Endothelial cell of umbilical vein (primary cell): ENCODE measurements at regions of chr17 and their contacts with region 1.

Region 1: GRCh38 chr17:73192894-73193701 is at the start of gene COG1:
- DNase-seq: peak; percentile 86
- H3K4me3 ChIP-seq: peak within 1 kb of the TSS; percentile 78 to 94 (median 78)
- H3K27ac ChIP-seq: peak within 1 kb of the TSS; percentile 56
- H3K4me1 ChIP-seq: peaks cover 14% of the 10 kb centered on the region
- H3K27me3 ChIP-seq: no peaks in the 10 kb centered on the region
- CTCF ChIP-seq: no peak
- POLR2A ChIP-seq: peak; percentile 77
- total RNA-seq, gene COG1: 38.6 and 39.0 TPM in 2 replicates

Region 2: DNA sequence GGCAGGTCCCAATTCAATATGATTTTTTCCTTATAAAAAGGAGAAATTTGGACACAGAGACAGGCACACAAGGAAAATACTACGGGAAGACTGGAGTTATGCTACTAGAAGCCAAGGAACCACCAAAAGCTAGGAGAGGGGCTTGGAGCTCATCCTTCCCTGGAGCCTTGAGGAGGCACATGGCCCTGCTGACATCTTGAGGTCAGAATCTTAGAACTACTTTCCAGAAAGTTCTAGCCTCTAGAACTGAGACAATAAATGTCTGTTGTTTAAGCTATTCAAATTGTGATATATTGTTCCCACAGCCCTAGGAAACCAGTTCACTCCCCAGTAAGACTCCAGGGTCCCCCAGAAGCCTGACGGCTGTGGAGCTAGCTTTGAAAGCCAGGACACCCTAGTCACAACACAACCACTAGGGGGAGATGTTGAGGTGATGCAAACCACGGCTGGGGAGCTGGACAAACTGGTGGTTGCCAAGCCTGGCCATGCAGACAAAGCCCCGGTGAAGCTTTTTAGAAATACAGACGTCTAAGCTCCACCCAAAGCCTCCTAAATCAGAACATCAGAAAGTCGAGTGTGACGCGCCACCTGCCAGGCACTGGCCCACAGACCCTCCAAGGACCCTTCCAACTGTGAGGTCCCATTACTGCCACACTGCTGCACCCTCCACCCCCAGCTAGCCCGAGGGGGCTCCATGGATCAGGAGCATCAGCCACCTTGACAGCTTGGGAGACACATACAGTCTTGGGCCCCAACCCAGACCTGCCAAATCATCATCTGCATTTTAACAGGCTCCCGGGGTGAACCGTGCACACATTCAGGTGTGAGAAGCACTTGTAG is 207.0 kb before region 1 on chr17:
- CTCF ChIA-PET with region 1: interaction called, 17 read pairs
- POLR2A ChIA-PET with region 1: no interaction called
- dilution Hi-C with region 1: no loop called
- intact Hi-C with region 1: loop called (anchors 2 kb)
- DNase-seq: peak; percentile 53
- H3K4me3 ChIP-seq: no peak overlapping the region
- H3K27ac ChIP-seq: no peak overlapping the region
- H3K4me1 ChIP-seq: peaks cover 12% of the 10 kb centered on the region
- H3K27me3 ChIP-seq: no peaks in the 10 kb centered on the region
- CTCF ChIP-seq: peak; percentile 88 to 89
- POLR2A ChIP-seq: no peak

Region 3: GRCh38 chr17:73045724-73046123 is 147.4 kb before region 1 on chr17:
- CTCF ChIA-PET with region 1: no interaction called
- POLR2A ChIA-PET with region 1: no interaction called
- dilution Hi-C with region 1: no loop called
- intact Hi-C with region 1: no loop called
- DNase-seq: no peak
- H3K4me3 ChIP-seq: no peak overlapping the region
- H3K27ac ChIP-seq: no peak overlapping the region
- H3K4me1 ChIP-seq: no peaks in the 10 kb centered on the region
- H3K27me3 ChIP-seq: no peaks in the 10 kb centered on the region
- CTCF ChIP-seq: no peak
- POLR2A ChIP-seq: no peak

Region 4: DNA sequence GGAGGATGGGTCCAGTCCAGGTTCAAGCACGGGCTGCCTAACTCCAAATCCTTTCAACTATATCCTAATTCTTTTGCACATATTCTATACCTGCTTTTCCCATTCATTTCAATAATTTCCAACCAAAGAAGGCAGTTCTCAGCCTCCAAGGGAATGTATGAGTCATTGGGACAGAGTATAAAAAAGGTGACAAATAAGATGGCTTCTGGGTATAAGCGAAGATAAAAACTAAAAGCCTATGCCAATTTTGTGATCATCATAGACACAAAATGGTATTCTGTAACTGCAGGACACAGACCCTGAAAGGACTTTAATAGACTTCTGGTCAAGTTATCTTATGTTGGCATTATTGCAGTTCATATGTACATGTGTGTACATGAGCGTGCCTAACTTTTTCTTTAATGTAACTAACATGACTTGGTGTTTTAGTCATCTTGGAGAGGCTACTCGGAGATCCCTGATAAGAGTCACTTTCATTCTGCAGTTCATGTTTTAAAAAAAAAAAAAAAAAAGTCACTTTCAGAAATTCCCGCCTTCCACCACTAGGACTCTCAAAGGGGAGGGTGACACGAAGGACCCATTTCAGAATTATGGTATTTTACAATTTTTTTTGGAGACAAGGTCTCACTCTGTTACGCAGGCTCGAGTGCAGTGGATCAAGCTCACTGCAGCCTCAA is 17.0 kb after region 1 on chr17:
- CTCF ChIA-PET with region 1: interaction called, 11 read pairs
- POLR2A ChIA-PET with region 1: no interaction called
- dilution Hi-C with region 1: no loop called
- intact Hi-C with region 1: no loop called
- DNase-seq: no peak
- H3K4me3 ChIP-seq: no peak overlapping the region
- H3K27ac ChIP-seq: no peak overlapping the region
- H3K4me1 ChIP-seq: no peaks in the 10 kb centered on the region
- H3K27me3 ChIP-seq: no peaks in the 10 kb centered on the region
- CTCF ChIP-seq: peak; percentile 13 to 21
- POLR2A ChIP-seq: no peak

Region 5: DNA sequence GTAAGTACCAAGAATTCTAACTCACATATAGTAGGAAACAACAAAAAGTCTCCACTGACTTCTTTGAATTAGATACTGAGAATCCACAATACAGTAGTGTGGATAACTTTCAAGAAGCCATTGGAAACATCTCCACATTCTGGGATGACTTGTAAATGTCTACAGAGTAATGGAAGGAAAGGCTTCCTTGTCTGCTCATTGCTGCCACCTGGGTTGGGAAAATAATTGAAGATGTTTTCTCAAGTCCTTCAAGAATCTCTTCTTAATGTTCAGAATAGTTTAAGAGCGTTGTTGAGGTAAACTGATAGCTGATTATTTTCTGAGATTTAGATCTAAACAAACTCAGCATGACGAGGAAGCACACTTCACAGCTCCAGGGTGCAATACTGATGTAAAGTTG is 54.6 kb after region 1 on chr17:
- CTCF ChIA-PET with region 1: interaction called, 16 read pairs
- POLR2A ChIA-PET with region 1: no interaction called
- dilution Hi-C with region 1: no loop called
- intact Hi-C with region 1: loop called (anchors 1 kb)
- DNase-seq: peak; percentile 29
- H3K4me3 ChIP-seq: no peak overlapping the region
- H3K27ac ChIP-seq: no peak overlapping the region
- H3K4me1 ChIP-seq: no peaks in the 10 kb centered on the region
- H3K27me3 ChIP-seq: no peaks in the 10 kb centered on the region
- CTCF ChIP-seq: no peak
- POLR2A ChIP-seq: no peak

Region 6: DNA sequence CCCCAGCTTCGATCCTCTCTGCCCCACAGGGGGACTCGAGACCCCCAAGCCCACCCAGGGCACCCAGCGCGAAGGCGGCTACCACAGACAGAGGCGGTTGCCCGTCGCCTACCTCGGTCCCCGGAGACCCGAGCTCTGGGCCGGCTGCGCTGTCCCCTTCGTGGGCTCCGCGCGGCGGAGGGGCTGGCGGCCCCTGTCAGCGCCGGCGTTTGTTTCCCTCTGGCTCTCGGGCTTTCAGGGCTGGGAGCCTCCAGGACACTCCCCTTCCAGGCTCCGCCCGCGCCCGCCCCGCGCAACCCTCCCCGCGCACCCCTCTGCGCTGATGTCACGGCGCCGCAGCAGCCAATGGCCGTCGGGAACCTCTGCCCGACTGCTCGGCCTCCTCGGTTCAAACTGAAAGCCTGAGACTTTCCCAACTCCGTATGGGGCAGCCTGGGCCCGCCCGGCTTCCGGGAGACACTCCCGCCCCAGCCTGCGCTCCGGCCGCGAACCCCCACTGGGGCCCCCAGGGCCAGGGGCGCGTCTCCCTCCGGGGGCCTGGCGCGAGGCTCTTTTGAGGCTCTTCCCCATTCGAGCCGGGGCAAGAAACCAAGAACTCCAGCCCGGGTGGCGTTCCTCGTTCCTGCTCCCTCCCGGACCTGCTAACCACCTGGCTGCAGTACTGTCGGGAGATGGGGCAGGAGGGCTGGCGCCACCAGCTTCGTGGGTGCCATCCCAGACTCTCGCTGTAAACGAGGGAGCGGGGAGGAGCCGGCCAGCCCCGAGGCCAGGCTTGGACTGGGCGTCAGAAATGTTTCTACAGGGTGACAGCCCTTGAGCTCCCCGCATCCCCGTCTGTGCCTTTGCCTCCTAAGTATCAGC is 118.9 kb after region 1 on chr17 and contains the start of gene CDC42EP4:
- CTCF ChIA-PET with region 1: interaction called, 3 read pairs
- POLR2A ChIA-PET with region 1: no interaction called
- dilution Hi-C with region 1: no loop called
- intact Hi-C with region 1: loop called (anchors 1 kb)
- DNase-seq: peak; percentile 95
- H3K4me3 ChIP-seq: peak within 1 kb of the TSS; percentile 82 to 97 (median 88)
- H3K27ac ChIP-seq: peak within 1 kb of the TSS; percentile 80
- H3K4me1 ChIP-seq: peaks cover 27% of the 10 kb centered on the region
- H3K27me3 ChIP-seq: peaks cover 2% of the 10 kb centered on the region in 2 experiments
- CTCF ChIP-seq: no peak
- POLR2A ChIP-seq: peak; percentile 80
- total RNA-seq, gene CDC42EP4: 18.8 and 19.6 TPM in 2 replicates